H1 (cell line): ENCODE measurements at regions of chr7 and their contacts with region 1.

Region 1: GRCh38 chr7:98831641-98832221 is 38.1 kb downstream of the TMEM130 start:
- DNase-seq: peak in 1 of 2 experiments; percentile 87
- H3K4me3 ChIP-seq: no peak overlapping the region
- H3K27ac ChIP-seq: no peak overlapping the region
- H3K4me1 ChIP-seq: peaks cover 0 to 9% (median 1%) of the 10 kb centered on the region in 4 experiments; a peak in 6 of 7 replicates
- H3K27me3 ChIP-seq: no peaks in the 10 kb centered on the region
- CTCF ChIP-seq: peak; percentile 61 to 85 (median 82)
- EP300 ChIP-seq: no peak
- POLR2A ChIP-seq: no peak
- RAD21 ChIP-seq: peak; percentile 42 to 59; a peak in 3 of 4 replicates

Region 2: DNA sequence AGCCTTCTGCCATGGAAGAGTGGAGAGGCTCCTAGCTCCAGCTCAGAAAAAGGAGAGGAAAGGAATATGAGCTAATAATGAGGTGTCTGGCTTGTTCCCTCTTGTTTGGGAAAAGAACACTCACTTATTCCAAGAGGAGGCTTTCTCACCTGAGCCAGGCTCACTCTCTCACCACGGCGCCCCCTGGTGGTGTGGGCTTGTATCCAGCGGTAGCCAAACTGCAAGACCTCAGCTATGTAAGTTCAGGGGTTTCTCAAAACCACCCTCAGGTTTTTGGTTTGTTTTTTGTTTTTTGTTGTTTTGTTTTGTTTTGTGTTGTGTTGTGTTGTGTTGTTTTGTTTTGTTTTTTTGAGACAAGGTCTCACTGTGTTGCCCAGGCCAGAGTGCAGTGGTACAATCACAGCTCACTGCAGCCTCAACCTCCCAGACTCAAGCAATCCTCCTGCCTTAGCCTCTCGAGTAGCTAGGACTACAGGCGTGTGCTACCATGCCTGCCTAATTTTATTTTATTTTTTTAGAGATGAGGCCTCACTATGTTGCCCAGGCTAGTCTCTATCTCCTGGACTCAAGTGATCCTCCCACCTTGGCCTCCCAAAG is 85.9 kb before region 1 on chr7:
- CTCF ChIA-PET with region 1: interaction called, 43 read pairs
- POLR2A ChIA-PET with region 1: no interaction called
- DNase-seq: peak in 1 of 2 experiments; percentile 97
- H3K4me3 ChIP-seq: no peak overlapping the region
- H3K27ac ChIP-seq: no peak overlapping the region
- H3K4me1 ChIP-seq: no peaks in the 10 kb centered on the region; a peak in 1 of 7 replicates
- H3K27me3 ChIP-seq: no peaks in the 10 kb centered on the region
- CTCF ChIP-seq: peak; percentile 86 to 89 (median 86)
- EP300 ChIP-seq: no peak
- POLR2A ChIP-seq: no peak
- RAD21 ChIP-seq: peak; percentile 79 to 83

Region 3: GRCh38 chr7:98764946-98765345 is 66.8 kb before region 1 on chr7:
- CTCF ChIA-PET with region 1: interaction called, 22 read pairs
- POLR2A ChIA-PET with region 1: interaction called, 4 read pairs
- DNase-seq: no peak
- H3K4me3 ChIP-seq: no peak overlapping the region
- H3K27ac ChIP-seq: no peak overlapping the region
- H3K4me1 ChIP-seq: no peaks in the 10 kb centered on the region
- H3K27me3 ChIP-seq: no peaks in the 10 kb centered on the region
- CTCF ChIP-seq: no peak
- EP300 ChIP-seq: no peak
- POLR2A ChIP-seq: no peak
- RAD21 ChIP-seq: no peak

Region 4: DNA sequence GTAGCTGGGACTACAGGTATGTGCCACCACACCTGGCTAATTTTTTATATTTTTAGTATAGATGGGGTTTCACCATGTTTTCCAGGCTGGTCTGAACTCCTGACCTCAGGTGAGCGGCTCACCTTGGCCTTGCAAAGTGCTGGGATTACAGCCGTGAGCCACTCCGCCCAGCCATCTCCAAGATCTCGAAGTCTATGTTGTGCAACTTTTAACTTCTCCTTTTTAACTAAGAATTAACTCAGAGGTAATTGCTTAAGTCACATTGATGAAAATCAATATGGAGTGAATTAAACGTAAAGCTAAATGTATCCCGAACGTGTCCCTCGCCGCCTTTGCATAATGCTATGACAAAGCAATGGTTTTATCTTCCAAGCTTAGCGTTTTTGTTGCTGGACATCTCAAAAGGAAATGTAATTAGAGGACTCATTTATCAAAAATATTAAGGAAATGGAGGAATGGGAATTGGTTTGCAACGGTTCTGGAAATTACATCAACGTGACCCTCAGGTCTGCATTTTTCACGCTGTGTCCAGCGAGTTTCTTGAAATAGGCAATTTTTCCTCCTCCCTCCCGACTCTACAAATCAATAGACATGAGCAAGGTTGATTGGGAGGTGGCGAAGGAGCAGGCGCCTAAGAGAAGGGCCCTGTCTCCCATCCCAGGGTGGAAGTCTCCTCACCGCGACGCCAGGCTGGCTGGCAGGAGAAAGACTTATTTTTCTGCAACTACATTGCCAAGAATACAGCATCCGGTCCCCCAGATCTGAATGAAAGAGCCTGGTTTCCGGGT is 51.7 kb before region 1 on chr7:
- CTCF ChIA-PET with region 1: interaction called, 37 read pairs
- POLR2A ChIA-PET with region 1: interaction called, 3 read pairs
- DNase-seq: no peak
- H3K4me3 ChIP-seq: no peak overlapping the region
- H3K27ac ChIP-seq: no peak overlapping the region
- H3K4me1 ChIP-seq: peaks cover 0 to 4% (median 0%) of the 10 kb centered on the region in 4 experiments; a peak in 2 of 7 replicates
- H3K27me3 ChIP-seq: no peaks in the 10 kb centered on the region
- CTCF ChIP-seq: no peak
- EP300 ChIP-seq: no peak
- POLR2A ChIP-seq: no peak
- RAD21 ChIP-seq: no peak

Region 5: DNA sequence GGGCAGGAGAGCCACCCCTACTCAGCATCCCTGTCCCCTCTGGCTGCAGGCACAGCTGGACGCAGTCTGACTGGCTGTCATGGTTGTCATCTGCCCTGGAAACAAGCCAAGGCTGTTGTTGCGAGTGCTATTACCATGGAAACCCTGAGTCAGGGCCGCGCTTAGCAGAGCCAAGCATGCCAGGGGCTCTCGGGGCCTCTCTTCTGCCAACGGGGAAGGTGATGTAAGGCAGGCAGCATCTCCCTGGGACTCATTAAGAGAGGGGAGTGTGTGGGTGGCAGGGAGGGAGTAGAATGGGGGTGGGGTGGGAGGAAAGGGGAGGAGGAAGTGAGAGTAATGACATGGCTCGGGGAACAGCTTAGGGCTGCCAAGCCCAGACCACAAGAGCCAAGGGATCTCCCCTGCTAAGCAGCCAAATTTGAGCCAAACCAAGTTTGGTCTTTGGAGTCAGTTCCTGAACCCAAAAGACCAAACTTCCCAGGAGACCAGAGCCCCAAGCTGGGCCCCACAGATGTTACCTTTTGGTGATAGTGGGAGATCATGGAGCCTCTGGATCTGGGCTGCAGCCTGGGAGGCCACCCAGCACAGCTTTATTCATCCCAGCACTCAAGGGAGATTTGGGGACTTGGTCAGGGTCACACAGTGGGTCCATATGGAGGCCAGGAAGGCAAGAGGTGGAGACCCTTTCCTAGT is 29.5 kb before region 1 on chr7:
- CTCF ChIA-PET with region 1: interaction called, 28 read pairs
- POLR2A ChIA-PET with region 1: no interaction called
- DNase-seq: no peak
- H3K4me3 ChIP-seq: no peak overlapping the region; a peak in 1 of 8 replicates
- H3K27ac ChIP-seq: no peak overlapping the region
- H3K4me1 ChIP-seq: no peaks in the 10 kb centered on the region
- H3K27me3 ChIP-seq: no peaks in the 10 kb centered on the region
- CTCF ChIP-seq: no peak
- EP300 ChIP-seq: no peak
- POLR2A ChIP-seq: no peak
- RAD21 ChIP-seq: no peak

Region 6: GRCh38 chr7:98821348-98821747 is 10.4 kb before region 1 on chr7:
- CTCF ChIA-PET with region 1: interaction called, 224 read pairs
- POLR2A ChIA-PET with region 1: no interaction called
- DNase-seq: no peak
- H3K4me3 ChIP-seq: no peak overlapping the region
- H3K27ac ChIP-seq: no peak overlapping the region
- H3K4me1 ChIP-seq: peaks cover 0 to 5% (median 2%) of the 10 kb centered on the region in 4 experiments; a peak in 6 of 7 replicates
- H3K27me3 ChIP-seq: no peaks in the 10 kb centered on the region; a peak in 1 of 7 replicates
- CTCF ChIP-seq: no peak
- EP300 ChIP-seq: no peak
- POLR2A ChIP-seq: no peak
- RAD21 ChIP-seq: no peak